Activated CD4-positive, alpha-beta memory T cell treated with anti-CD3 and anti-CD28 coated beads for 36 hours (primary cell): ENCODE measurements at regions of chr15 and their contacts with region 1.

Region 1: DNA sequence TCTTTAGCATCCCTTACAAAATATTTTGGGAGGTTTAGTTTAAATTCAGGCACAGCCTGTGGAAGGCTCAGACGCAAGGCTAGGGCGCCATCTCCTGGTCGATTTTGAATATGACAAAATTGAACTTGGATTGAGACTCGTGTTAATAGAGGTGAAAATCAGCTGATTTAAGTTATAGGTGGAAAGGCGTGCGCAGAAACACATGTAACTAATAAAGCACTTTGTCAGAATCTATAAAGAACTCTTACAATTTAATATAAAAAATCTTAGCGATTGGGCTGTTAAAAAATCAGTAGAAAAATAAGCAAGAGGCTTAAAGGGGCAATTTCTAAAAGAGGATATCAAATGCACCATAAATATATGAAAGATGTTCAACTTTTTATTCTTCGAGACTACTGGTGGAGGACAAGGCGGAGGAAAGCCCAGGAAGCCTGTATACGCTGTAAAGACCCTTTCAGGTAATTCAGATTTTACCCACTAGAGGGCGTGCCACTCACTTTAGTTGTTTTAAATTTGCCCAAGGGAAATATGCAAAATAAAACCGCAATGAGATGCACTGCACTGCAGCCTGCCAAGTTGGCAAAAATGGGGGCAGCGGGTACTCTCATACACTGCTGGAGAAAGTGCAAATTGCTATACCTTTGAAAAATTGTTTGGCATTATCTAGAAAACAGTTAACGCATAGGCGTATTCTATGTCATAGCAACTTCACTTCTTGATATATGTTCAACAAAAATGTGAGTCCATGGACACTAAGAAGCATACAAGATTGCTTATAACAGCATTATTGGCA is 64.7 kb downstream of the SLC30A4 start:
- DNase-seq: peak; percentile 79
- H3K4me3 Mint-ChIP-seq: peak overlapping the region; percentile 74
- H3K27ac Mint-ChIP-seq: peak overlapping the region; percentile 85
- H3K4me1 Mint-ChIP-seq: peaks cover 45% of the 10 kb centered on the region
- H3K27me3 Mint-ChIP-seq: no peaks in the 10 kb centered on the region

Region 2: DNA sequence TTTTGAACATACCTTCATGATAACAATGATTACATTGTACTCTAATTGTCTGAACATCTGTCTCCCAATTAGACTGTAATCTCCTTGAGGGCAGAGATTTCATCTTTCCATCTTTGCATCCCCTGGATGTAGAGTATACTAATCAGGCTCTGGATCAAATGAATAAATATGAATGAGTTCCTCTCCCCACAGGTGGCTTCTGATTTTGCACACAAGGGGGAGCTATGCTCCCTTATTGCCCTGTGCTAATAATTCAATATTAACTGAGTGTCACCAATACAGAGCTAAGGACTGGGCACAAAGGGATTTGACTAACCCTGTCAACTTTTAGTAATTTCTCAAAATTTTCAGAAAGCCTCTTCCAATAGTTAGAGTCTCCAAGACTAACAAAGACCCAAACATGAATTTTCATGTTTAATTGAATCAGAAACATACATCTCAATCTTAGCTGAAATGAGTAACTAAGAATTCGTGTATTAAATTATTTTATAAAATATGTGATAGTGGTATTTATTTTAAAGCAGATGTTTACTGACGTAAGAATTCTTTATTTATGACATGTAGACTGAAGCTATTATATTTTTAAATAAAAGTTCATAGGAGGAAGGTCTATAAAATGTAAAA is 331.2 kb before region 1 on chr15:
- CTCF ChIA-PET with region 1: no interaction called
- POLR2A ChIA-PET with region 1: no interaction called
- intact Hi-C with region 1: loop called (anchors 5 kb)
- DNase-seq: no peak
- H3K4me3 Mint-ChIP-seq: no peak overlapping the region
- H3K27ac Mint-ChIP-seq: no peak overlapping the region
- H3K4me1 Mint-ChIP-seq: no peaks in the 10 kb centered on the region
- H3K27me3 Mint-ChIP-seq: peaks cover 44% of the 10 kb centered on the region

Region 3: DNA sequence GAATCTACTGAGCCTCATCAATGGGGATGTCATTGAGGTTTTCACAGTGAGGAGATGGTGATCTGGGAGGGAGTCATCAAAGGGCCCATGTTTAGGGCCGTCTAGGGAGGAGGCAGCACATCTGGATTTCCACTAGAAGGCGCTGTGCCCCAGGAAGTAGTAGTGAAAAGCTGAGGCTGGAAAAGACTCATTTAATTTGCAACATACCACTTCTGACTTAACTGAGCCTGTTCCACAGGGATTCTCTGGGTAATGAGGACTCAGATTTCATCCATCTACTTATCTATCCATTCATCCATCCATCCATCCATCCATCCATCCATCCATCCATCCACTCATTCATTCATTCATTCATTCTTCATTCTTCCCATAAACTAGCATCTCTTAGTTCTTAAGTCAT is 252.6 kb before region 1 on chr15:
- CTCF ChIA-PET with region 1: no interaction called
- POLR2A ChIA-PET with region 1: no interaction called
- intact Hi-C with region 1: loop called (anchors 1 kb)
- DNase-seq: peak; percentile 81
- H3K4me3 Mint-ChIP-seq: no peak overlapping the region
- H3K27ac Mint-ChIP-seq: no peak overlapping the region
- H3K4me1 Mint-ChIP-seq: peaks cover 4% of the 10 kb centered on the region
- H3K27me3 Mint-ChIP-seq: peaks cover 7% of the 10 kb centered on the region

Region 4: DNA sequence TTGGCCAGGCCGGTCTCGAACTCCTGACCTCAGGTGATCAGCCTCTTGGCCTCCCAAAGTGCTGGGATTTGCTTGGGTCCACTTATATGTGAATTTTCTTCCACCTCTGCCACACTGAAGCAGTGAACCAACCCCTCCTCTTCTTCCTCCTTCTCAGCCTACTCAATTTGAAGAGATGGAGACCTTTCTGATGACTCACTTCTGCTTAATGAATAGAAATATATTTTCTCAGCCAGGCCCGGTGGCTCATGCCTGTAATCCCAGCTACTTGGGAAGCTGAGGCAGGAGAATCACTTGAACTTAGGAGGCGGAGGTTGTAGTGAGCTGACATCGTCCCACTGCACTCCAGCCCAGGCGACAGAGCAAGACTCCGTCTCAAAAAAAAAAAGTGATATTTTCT is 32.7 kb before region 1 on chr15:
- CTCF ChIA-PET with region 1: interaction called, 179 read pairs
- POLR2A ChIA-PET with region 1: no interaction called
- intact Hi-C with region 1: loop called (anchors 1 kb)
- DNase-seq: no peak
- H3K4me3 Mint-ChIP-seq: no peak overlapping the region
- H3K27ac Mint-ChIP-seq: no peak overlapping the region
- H3K4me1 Mint-ChIP-seq: no peaks in the 10 kb centered on the region
- H3K27me3 Mint-ChIP-seq: no peaks in the 10 kb centered on the region

Region 5: GRCh38 chr15:45522328-45523160 is 64.7 kb after region 1 on chr15 and contains the start of gene SLC30A4:
- CTCF ChIA-PET with region 1: interaction called, 6 read pairs
- POLR2A ChIA-PET with region 1: no interaction called
- intact Hi-C with region 1: loop called (anchors 2 kb)
- DNase-seq: peak; percentile 66
- H3K4me3 Mint-ChIP-seq: peak within 1 kb of the TSS; percentile 82
- H3K27ac Mint-ChIP-seq: peak within 1 kb of the TSS; percentile 14
- H3K4me1 Mint-ChIP-seq: peaks cover 21% of the 10 kb centered on the region
- H3K27me3 Mint-ChIP-seq: no peaks in the 10 kb centered on the region
- total RNA-seq, gene SLC30A4: 1.5 to 2.0 TPM

Region 6: DNA sequence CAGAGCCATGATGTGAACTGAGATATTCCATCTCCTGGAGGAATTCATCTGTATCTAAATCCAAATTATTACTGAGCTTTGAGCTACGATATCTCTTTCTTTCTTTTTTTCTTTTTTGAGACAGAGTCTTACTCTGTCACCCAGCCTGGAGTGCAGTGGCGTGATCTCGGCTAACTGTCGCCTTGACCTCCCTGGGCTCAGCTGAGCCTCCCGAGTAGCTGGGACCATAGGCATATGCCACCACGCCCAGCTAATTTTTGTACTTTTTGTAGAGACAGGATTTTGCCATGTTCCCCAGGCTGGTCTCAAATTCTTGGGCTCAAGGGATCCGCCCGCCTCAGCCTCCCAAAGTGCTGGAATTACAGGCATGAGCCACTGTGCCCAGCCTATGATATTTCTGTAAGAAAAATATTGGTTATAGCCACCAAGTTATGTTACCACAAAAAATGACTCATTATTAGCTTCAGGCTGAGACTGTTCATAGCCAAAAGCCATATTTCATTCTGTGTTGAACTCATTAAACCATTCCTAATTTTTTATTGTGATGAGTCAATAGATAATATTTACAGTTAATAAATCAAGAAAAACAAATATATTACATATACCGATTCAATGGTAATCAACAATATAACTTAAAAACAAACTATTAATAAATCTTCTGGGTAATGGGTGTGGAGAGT is 91.8 kb after region 1 on chr15:
- CTCF ChIA-PET with region 1: no interaction called
- POLR2A ChIA-PET with region 1: no interaction called
- intact Hi-C with region 1: no loop called
- DNase-seq: no peak
- H3K4me3 Mint-ChIP-seq: no peak overlapping the region
- H3K27ac Mint-ChIP-seq: no peak overlapping the region
- H3K4me1 Mint-ChIP-seq: no peaks in the 10 kb centered on the region
- H3K27me3 Mint-ChIP-seq: peaks cover 6% of the 10 kb centered on the region

Region 7: DNA sequence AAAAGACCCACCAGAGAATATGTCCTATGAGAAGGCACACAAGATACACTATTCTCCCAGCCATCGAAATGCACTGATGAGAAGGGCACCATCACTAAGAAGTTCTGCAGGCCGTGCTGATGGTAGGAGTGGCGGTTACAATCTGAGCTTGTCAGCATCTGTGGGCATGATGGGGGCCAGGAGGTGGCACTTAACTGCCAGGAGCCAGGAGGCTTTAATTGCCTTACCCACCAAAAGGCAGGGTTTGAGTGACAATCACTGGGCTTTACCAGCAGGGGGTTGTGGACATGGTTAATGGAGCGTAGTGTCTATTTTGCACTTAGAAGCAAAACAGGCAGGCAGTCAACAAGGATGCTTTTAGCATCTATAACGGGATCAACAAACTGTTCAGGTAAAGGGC is 161.0 kb after region 1 on chr15:
- CTCF ChIA-PET with region 1: interaction called, 120 read pairs
- POLR2A ChIA-PET with region 1: no interaction called
- intact Hi-C with region 1: loop called (anchors 1 kb)
- DNase-seq: peak; percentile 25
- H3K4me3 Mint-ChIP-seq: no peak overlapping the region
- H3K27ac Mint-ChIP-seq: no peak overlapping the region
- H3K4me1 Mint-ChIP-seq: no peaks in the 10 kb centered on the region
- H3K27me3 Mint-ChIP-seq: no peaks in the 10 kb centered on the region

Region 8: GRCh38 chr15:45747426-45747825 is 289.6 kb after region 1 on chr15:
- CTCF ChIA-PET with region 1: no interaction called
- POLR2A ChIA-PET with region 1: no interaction called
- intact Hi-C with region 1: no loop called
- DNase-seq: no peak
- H3K4me3 Mint-ChIP-seq: no peak overlapping the region
- H3K27ac Mint-ChIP-seq: no peak overlapping the region
- H3K4me1 Mint-ChIP-seq: no peaks in the 10 kb centered on the region
- H3K27me3 Mint-ChIP-seq: peaks cover 1% of the 10 kb centered on the region

Region 9: DNA sequence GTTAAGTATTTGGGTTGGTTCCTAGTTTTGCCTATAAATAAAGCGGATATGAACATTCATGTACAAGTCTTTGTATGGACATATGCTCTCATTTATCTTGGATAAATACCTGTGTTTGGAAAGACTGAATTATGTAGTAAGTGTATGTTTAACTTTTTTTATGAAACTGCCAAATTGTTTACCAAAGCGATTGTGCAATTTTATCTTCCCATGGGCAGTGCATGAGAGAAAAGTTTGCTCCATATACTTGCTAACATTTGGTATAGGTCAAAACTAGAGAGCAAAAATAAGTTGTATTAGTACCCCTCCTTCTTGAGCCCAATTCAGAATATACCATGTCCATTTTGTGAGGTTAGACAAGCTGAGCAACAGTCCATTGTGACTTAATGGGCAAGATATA is 679.6 kb after region 1 on chr15:
- CTCF ChIA-PET with region 1: no interaction called
- POLR2A ChIA-PET with region 1: no interaction called
- intact Hi-C with region 1: no loop called
- DNase-seq: no peak
- H3K4me3 Mint-ChIP-seq: no peak overlapping the region
- H3K27ac Mint-ChIP-seq: no peak overlapping the region
- H3K4me1 Mint-ChIP-seq: no peaks in the 10 kb centered on the region
- H3K27me3 Mint-ChIP-seq: no peaks in the 10 kb centered on the region